ENCODE measurements at regions of chr2 and their contacts with region 1.

Region 1: DNA sequence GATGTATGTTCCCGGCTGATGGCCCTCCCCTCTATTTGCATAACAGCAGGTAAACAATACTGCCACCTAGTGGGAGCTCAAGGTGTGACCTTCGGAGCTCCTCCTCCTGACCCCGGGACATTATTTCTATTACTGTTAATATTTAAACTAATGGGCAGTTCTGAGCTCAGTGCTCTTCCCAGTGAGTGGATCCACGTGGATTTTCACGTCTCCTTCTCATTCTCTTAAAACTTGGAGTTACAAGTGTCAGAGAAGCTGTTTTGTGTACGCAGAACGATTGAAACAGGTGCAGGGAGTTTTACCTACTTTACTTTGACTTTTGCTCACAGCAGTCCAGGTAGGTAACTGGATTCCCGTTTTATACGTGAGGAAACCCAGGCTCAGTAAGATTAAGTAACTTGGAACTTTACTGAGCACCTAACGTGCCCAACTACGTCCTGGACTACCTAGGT is 127.3 kb downstream of the PRKCE start:
- DNase-seq: peak; percentile 66
- H3K4me3 Mint-ChIP-seq: no peak overlapping the region
- H3K27ac Mint-ChIP-seq: no peak overlapping the region
- H3K4me1 Mint-ChIP-seq: peaks cover 8% of the 10 kb centered on the region
- H3K27me3 Mint-ChIP-seq: no peaks in the 10 kb centered on the region

Region 2: GRCh38 chr2:45643543-45644542 is 134.9 kb before region 1 on chr2:
- CTCF ChIA-PET with region 1: interaction called, 29 read pairs
- POLR2A ChIA-PET with region 1: interaction called, 4 read pairs
- DNase-seq: peak; percentile 72
- H3K4me3 Mint-ChIP-seq: peak overlapping the region; percentile 60
- H3K27ac Mint-ChIP-seq: no peak overlapping the region
- H3K4me1 Mint-ChIP-seq: peaks cover 23% of the 10 kb centered on the region
- H3K27me3 Mint-ChIP-seq: peaks cover 38% of the 10 kb centered on the region

Region 3: DNA sequence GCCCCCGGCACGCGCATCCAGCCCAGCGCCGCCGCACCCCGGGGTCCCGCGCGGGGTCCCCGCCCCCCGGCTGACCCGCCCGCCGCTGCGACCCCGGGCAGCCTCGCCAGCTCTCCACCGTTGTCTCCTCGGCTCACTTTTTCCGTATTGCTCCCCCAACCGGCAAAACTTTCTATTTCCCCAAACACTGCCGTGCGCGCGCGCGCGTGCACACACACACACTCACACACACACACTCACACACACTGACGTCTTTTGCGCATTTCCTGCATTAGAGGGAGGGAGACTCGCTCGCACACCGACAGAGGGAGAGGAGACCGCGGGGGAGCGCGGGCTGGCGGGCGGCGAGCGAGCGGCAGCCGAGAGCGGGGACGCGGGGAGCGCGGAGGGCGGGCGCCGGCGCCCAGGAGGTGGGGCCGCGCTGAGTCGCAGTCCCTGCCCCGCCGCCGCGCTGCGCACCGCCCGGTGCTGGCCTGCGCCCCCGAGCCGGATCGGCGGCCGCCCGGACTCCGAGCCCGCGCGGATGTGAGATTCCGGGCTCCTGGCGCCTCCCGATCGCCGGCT is 127.8 kb before region 1 on chr2:
- CTCF ChIA-PET with region 1: interaction called, 29 read pairs
- POLR2A ChIA-PET with region 1: interaction called, 9 read pairs
- DNase-seq: peak; percentile 94
- H3K4me3 Mint-ChIP-seq: peak overlapping the region; percentile 93
- H3K27ac Mint-ChIP-seq: peak overlapping the region; percentile 94
- H3K4me1 Mint-ChIP-seq: peaks cover 29% of the 10 kb centered on the region
- H3K27me3 Mint-ChIP-seq: peaks cover 3% of the 10 kb centered on the region

Region 4: GRCh38 chr2:45765728-45766254 is 13.0 kb before region 1 on chr2:
- CTCF ChIA-PET with region 1: interaction called, 11 read pairs
- POLR2A ChIA-PET with region 1: no interaction called
- DNase-seq: no peak
- H3K4me3 Mint-ChIP-seq: no peak overlapping the region
- H3K27ac Mint-ChIP-seq: no peak overlapping the region
- H3K4me1 Mint-ChIP-seq: no peaks in the 10 kb centered on the region
- H3K27me3 Mint-ChIP-seq: peaks cover 2% of the 10 kb centered on the region

Region 5: DNA sequence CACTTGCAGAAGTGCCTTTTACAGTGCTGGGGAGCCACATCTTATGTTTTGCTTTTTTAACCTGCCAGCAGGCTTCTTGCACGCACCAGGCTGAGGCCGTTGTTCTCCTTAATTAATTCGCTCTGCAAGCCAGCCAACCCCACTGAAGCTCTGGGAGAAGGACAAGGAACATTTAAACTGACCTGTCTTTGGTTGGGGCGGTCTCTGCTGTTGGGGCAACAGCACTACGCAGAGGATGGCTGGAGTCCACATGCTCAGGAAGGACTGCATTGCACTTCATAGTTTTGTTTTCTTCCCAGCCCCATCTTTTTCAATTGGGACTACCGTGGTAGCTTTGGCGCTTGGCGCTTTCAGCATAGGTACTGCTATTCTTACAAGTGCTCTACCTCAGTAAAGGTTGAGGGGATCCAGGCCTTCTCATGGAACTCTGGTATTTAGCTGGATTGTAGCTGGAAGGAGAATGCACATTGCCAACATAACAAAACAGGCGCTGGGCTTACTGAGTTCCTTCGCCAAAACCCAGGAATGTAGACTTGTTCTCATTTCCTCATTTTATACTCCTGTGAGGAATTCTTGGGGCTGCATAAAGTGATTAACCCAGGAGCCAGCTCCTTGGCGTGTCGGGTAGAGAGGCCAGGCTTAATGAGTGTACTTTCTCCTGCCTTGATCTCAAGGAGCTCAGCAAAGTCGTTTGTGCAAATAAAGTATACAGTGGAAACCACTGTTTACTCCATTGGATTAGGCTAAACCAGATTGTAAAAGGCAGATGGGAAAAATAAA is 18.9 kb after region 1 on chr2:
- CTCF ChIA-PET with region 1: interaction called, 45 read pairs
- POLR2A ChIA-PET with region 1: no interaction called
- DNase-seq: no peak
- H3K4me3 Mint-ChIP-seq: no peak overlapping the region
- H3K27ac Mint-ChIP-seq: no peak overlapping the region
- H3K4me1 Mint-ChIP-seq: no peaks in the 10 kb centered on the region
- H3K27me3 Mint-ChIP-seq: no peaks in the 10 kb centered on the region

Region 6: GRCh38 chr2:45935791-45936622 is 157.3 kb after region 1 on chr2:
- CTCF ChIA-PET with region 1: interaction called, 24 read pairs
- POLR2A ChIA-PET with region 1: no interaction called
- DNase-seq: peak; percentile 50
- H3K4me3 Mint-ChIP-seq: no peak overlapping the region
- H3K27ac Mint-ChIP-seq: no peak overlapping the region
- H3K4me1 Mint-ChIP-seq: peaks cover 5% of the 10 kb centered on the region
- H3K27me3 Mint-ChIP-seq: no peaks in the 10 kb centered on the region